Mammary epithelial cell (primary cell): ENCODE measurements at regions of chr13 and their contacts with region 1.

Region 1: DNA sequence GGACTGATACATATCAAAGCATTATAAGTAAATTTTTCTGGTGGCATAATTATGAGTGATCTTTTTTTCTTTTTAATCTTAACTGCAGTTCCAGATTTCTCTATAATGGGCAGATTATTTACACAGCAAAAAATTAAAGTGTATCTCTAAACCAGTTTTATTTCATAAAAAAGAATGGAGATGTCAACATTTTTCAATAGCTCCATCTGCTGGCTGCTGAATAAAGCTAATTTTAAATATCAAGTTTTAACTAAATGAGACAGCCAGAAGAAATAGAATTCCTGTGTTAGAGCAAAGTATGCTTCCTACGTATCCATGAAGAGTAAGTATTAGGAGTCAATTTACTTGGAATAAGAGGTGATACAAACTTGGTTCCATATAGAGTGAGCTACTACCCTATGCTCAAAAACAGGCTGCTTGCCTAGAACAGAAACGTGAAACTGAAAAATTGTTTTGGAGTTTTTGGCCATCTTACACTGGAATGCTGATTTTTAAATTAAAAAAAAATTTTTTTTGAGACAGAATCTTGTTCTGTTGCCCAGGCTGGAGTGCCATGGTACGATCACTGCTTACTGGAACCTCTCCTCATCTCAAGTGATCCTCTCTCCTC is 5.0 kb upstream of the PDS5B start:
- DNase-seq: no peak
- H3K4me3 ChIP-seq: no peak overlapping the region
- H3K27ac ChIP-seq: no peak overlapping the region
- H3K4me1 ChIP-seq: peaks cover 5% of the 10 kb centered on the region
- H3K27me3 ChIP-seq: no peaks in the 10 kb centered on the region
- CTCF ChIP-seq: peak; percentile 55

Region 2: GRCh38 chr13:32019612-32020233 is 561.6 kb before region 1 on chr13:
- CTCF ChIA-PET with region 1: no interaction called
- dilution Hi-C with region 1: no loop called
- in situ Hi-C with region 1: no loop called
- intact Hi-C with region 1: loop called (anchors 5 kb)
- DNase-seq: peak; percentile 30
- H3K4me3 ChIP-seq: no peak overlapping the region
- H3K27ac ChIP-seq: no peak overlapping the region
- H3K4me1 ChIP-seq: no peaks in the 10 kb centered on the region
- H3K27me3 ChIP-seq: no peaks in the 10 kb centered on the region
- CTCF ChIP-seq: peak; percentile 47 to 79

Region 3: DNA sequence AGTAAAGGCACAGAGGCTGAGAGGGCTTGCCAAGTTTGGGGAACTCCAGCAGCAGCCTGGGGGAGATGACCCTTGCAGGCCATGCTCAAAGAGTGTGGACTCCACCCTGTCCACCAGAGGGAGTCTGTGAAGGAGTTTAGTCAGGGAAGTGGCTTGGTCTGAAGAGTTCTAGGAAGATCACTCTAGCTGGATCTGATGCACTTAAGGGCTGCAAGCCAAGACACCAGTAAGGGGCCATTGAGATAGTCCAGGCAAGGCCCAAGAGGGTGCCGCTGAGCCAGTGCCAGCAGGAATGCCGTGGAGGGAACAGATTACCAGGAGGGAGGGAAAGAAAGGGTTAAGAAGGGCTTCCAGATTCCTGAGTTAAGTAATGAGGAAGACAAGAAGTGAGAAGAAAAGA is 334.8 kb before region 1 on chr13:
- CTCF ChIA-PET with region 1: no interaction called
- dilution Hi-C with region 1: no loop called
- in situ Hi-C with region 1: no loop called
- intact Hi-C with region 1: loop called (anchors 5 kb)
- DNase-seq: peak; percentile 61
- H3K4me3 ChIP-seq: no peak overlapping the region
- H3K27ac ChIP-seq: no peak overlapping the region
- H3K4me1 ChIP-seq: no peaks in the 10 kb centered on the region
- H3K27me3 ChIP-seq: no peaks in the 10 kb centered on the region
- CTCF ChIP-seq: peak; percentile 87 to 90

Region 4: DNA sequence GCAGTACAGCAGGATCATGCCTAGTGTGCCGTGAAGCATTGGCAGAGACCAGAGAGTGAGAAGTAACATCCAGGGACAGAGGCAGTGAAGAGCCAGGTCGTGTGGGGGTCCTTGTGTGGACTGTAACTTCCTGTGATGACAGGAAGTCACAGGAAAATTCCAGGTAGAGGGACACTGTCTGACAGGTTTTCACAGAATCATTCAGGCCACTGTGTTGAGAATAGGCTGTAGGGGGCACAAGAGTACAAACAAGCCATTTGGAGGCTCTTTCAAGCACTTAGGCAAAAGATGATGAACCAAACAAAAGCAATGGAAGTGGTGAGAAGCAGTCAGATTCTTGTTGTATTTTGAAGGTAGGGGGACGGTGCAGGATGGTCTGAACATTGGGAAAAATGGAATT is 199.7 kb before region 1 on chr13:
- CTCF ChIA-PET with region 1: interaction called, 8 read pairs
- dilution Hi-C with region 1: no loop called
- in situ Hi-C with region 1: no loop called
- intact Hi-C with region 1: loop called (anchors 1 kb)
- DNase-seq: peak; percentile 13
- H3K4me3 ChIP-seq: no peak overlapping the region
- H3K27ac ChIP-seq: no peak overlapping the region
- H3K4me1 ChIP-seq: no peaks in the 10 kb centered on the region
- H3K27me3 ChIP-seq: no peaks in the 10 kb centered on the region
- CTCF ChIP-seq: peak; percentile 9 to 64

Region 5: DNA sequence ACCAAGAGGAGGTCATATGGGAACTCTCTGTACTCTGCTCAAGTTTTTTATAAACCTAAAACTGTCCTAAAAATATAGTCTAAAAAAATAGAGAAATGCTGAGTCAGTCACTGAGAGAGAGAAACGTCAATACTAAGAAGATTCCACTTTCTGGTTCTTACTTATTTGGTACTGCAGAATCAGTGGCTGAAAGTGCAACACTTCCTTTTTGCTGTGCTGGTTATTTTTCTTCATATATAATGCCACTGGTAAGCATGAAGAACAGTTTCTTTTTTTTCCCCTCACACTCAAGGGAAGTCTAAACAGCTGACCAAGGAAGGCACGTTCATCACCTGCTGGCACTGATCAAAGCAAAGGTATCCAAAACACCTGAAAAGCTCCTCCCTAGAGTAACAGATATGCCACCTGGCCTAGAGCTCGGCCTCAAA is 109.1 kb before region 1 on chr13:
- CTCF ChIA-PET with region 1: no interaction called
- dilution Hi-C with region 1: no loop called
- in situ Hi-C with region 1: no loop called
- intact Hi-C with region 1: loop called (anchors 2 kb)
- DNase-seq: no peak
- H3K4me3 ChIP-seq: no peak overlapping the region
- H3K27ac ChIP-seq: no peak overlapping the region
- H3K4me1 ChIP-seq: no peaks in the 10 kb centered on the region
- H3K27me3 ChIP-seq: no peaks in the 10 kb centered on the region
- CTCF ChIP-seq: no peak

Region 6: GRCh38 chr13:32538621-32539246 is 42.5 kb before region 1 on chr13 and contains the start of gene N4BP2L2:
- CTCF ChIA-PET with region 1: no interaction called
- dilution Hi-C with region 1: no loop called
- in situ Hi-C with region 1: no loop called
- intact Hi-C with region 1: loop called (anchors 2 kb)
- DNase-seq: peak; percentile 95
- H3K4me3 ChIP-seq: peak within 1 kb of the TSS; percentile 68 to 95 (median 77)
- H3K27ac ChIP-seq: peak within 1 kb of the TSS; percentile 90
- H3K4me1 ChIP-seq: peaks cover 4% of the 10 kb centered on the region
- H3K27me3 ChIP-seq: no peaks in the 10 kb centered on the region
- CTCF ChIP-seq: peak in 1 of 2 donors; percentile 8
- total RNA-seq, gene N4BP2L2: 99.0 to 102 TPM